ENCODE measurements at regions of chr1 and their contacts with region 1.

Region 1: DNA sequence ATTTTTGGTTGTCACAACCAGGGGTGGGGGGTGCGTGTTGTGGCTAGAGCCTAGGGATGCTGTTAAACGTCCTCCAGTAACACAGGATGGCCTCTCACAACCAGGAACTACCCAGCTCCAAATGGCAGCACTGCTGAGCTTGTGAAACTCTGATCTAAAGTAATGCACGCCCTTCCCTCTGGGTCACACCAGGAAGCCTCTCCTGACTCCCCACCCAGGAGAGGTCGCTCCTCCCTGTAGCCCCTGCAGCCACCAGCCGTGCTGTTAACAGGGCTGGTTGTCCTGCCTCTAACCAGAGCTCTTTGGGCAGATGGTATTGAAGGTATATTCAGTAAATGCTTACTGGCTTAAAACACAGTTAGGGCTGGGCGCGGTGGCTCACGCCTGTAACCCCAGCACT is 73.2 kb downstream of the NKAIN1 start:
- DNase-seq: no peak
- ATAC-seq: no peak
- H3K4me3 ChIP-seq: no peak overlapping the region
- H3K27ac ChIP-seq: no peak overlapping the region
- H3K4me1 ChIP-seq: peaks cover 5% of the 10 kb centered on the region
- H3K27me3 ChIP-seq: no peaks in the 10 kb centered on the region
- CTCF ChIP-seq: no peak

Region 2: DNA sequence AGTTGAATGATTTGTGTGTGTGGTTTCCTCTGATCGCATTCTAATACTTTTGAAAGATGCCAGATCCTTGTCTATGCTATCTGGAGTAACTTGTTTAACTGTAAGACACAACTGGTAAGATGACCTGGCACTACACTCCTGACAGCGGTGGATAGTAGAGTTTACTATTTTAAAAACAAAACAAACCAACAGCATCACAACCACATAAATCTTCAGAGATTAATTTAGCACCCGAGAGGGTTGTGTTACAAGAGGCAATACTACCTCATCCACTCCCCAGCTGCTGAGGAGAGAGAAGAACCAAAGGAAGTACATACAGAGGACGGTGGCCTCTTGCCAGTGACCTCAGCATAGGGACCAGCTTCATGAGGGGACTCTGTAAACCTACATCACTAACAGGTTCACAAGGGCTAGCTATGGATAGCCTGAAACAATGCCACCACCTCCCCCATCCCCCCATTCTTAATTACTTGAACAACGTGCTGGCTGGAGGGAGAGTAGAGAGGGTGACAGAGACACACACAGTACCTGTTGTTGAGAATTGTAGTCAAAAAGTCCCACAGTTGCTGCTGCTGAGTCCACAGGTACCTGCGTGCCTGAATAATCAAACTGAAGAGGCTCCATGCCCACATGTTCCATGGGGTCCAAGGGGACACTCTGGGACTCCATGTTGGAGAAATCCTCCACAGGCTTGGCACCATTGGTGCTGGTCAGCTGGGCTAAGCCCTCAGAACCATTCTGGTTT is 174.4 kb before region 1 on chr1:
- intact Hi-C with region 1: loop called in 1 of 2 experiments (anchors 10 kb)
- DNase-seq: no peak
- ATAC-seq: peak; percentile 76 to 86 (median 81)
- H3K4me3 ChIP-seq: no peak overlapping the region
- H3K27ac ChIP-seq: peak overlapping the region; percentile 77
- H3K4me1 ChIP-seq: peaks cover 71% of the 10 kb centered on the region
- H3K27me3 ChIP-seq: no peaks in the 10 kb centered on the region
- CTCF ChIP-seq: no peak

Measured in psoas muscle (tissue), 8 donors.